CD4-positive, alpha-beta memory T cell (primary cell): ENCODE measurements at regions of chr6 and their contacts with region 1.

Region 1: DNA sequence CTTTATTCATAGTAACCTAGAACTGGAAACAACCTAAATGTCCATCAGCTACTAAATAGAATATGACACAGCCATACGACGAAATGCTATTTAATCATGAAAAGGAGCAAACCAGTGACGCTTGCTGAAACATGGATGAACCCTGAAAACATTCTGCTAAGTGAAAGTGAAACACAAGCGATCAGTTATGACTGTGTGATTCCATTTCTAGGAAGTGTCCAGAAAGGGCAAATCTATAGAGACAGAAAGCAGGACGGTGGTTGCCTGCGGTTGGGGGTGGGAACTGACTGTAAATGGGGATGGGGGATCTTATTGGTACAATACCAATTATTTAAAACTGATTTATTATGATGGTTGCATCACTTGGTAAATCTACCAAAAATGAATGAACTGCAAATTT is 126.8 kb downstream of the IPCEF1 start:
- DNase-seq: peak in 4 of 5 donors; percentile 39 to 70 (median 52)
- H3K4me3 ChIP-seq: peak overlapping the region; percentile 52 to 59
- H3K4me3 Mint-ChIP-seq: peak overlapping the region; percentile 86 to 95 (median 90)
- H3K27ac ChIP-seq: peak overlapping the region; percentile 42
- H3K27ac Mint-ChIP-seq: peak overlapping the region; percentile 89 to 96 (median 95)
- H3K4me1 ChIP-seq: peaks cover 75% of the 10 kb centered on the region
- H3K4me1 Mint-ChIP-seq: peaks cover 56 to 85% (median 74%) of the 10 kb centered on the region in 4 donors
- H3K27me3 ChIP-seq: no peaks in the 10 kb centered on the region
- H3K27me3 Mint-ChIP-seq: no peaks in the 10 kb centered on the region

Region 2: GRCh38 chr6:154138793-154139192 is 91.0 kb before region 1 on chr6:
- CTCF ChIA-PET with region 1: no interaction called
- POLR2A ChIA-PET with region 1: no interaction called
- intact Hi-C with region 1: no loop called
- DNase-seq: no peak
- H3K4me3 ChIP-seq: no peak overlapping the region
- H3K4me3 Mint-ChIP-seq: no peak overlapping the region
- H3K27ac ChIP-seq: no peak overlapping the region
- H3K27ac Mint-ChIP-seq: no peak overlapping the region
- H3K4me1 ChIP-seq: no peaks in the 10 kb centered on the region
- H3K4me1 Mint-ChIP-seq: no peaks in the 10 kb centered on the region
- H3K27me3 ChIP-seq: no peaks in the 10 kb centered on the region
- H3K27me3 Mint-ChIP-seq: peaks cover 12 to 15% of the 10 kb centered on the region in 2 donors

Region 3: GRCh38 chr6:154267508-154268106 is 37.8 kb after region 1 on chr6:
- CTCF ChIA-PET with region 1: interaction called, 3 read pairs
- POLR2A ChIA-PET with region 1: interaction called, 4 read pairs
- intact Hi-C with region 1: loop called (anchors 5 kb)
- DNase-seq: peak in 1 of 5 donors; percentile 16
- H3K4me3 ChIP-seq: no peak overlapping the region
- H3K4me3 Mint-ChIP-seq: peak overlapping the region in 7 of 8 donors; percentile 48 to 74 (median 66)
- H3K27ac ChIP-seq: no peak overlapping the region
- H3K27ac Mint-ChIP-seq: peak overlapping the region in 5 of 7 donors; percentile 27 to 89 (median 58)
- H3K4me1 ChIP-seq: peaks cover 26% of the 10 kb centered on the region
- H3K4me1 Mint-ChIP-seq: peaks cover 17 to 24% (median 20%) of the 10 kb centered on the region in 4 donors
- H3K27me3 ChIP-seq: no peaks in the 10 kb centered on the region
- H3K27me3 Mint-ChIP-seq: no peaks in the 10 kb centered on the region

Region 4: DNA sequence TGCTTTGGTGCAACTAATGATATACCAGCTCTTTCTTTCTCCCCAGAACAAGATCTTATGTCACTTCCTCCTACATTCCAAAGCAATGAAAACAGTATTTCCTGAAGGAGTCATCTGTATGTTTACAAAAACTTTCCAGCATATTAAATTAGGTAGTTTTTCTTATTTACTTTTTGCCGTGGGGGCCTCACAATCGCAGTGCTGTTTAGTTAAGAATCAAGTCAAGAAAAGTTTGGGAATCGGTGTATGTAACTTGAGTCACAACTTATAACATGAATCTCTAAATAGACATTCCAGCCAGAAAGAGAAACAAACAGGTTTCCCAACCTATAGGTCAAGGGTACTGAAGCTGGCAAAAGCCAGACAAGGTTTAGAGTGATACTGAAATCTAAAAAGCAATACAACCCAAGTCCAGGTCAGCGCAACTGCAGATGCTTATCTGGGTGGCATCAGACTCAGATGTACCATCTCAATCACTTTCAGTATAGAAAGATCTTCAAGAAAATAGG is 63.2 kb after region 1 on chr6:
- CTCF ChIA-PET with region 1: no interaction called
- POLR2A ChIA-PET with region 1: no interaction called
- intact Hi-C with region 1: no loop called
- DNase-seq: no peak
- H3K4me3 ChIP-seq: no peak overlapping the region
- H3K4me3 Mint-ChIP-seq: no peak overlapping the region
- H3K27ac ChIP-seq: no peak overlapping the region
- H3K27ac Mint-ChIP-seq: no peak overlapping the region
- H3K4me1 ChIP-seq: no peaks in the 10 kb centered on the region
- H3K4me1 Mint-ChIP-seq: no peaks in the 10 kb centered on the region
- H3K27me3 ChIP-seq: no peaks in the 10 kb centered on the region
- H3K27me3 Mint-ChIP-seq: peaks cover 0 to 1% of the 10 kb centered on the region in 2 donors